ENCODE measurements at regions of chr2 and their contacts with region 1.

Region 1: GRCh38 chr2:134457765-134458472 is 204.0 kb downstream of the MGAT5 start:
- DNase-seq: no peak
- ATAC-seq: no peak
- H3K4me3 ChIP-seq: no peak overlapping the region
- H3K27ac ChIP-seq: no peak overlapping the region
- H3K4me1 ChIP-seq: no peaks in the 10 kb centered on the region
- H3K27me3 ChIP-seq: no peaks in the 10 kb centered on the region
- CTCF ChIP-seq: no peak

Region 2: GRCh38 chr2:134897932-134898331 is 440.0 kb after region 1 on chr2:
- intact Hi-C with region 1: loop called (anchors 5 to 10 kb)
- DNase-seq: no peak
- ATAC-seq: no peak
- H3K4me3 ChIP-seq: no peak overlapping the region
- H3K27ac ChIP-seq: no peak overlapping the region
- H3K4me1 ChIP-seq: no peaks in the 10 kb centered on the region
- H3K27me3 ChIP-seq: no peaks in the 10 kb centered on the region
- CTCF ChIP-seq: peak; percentile 32

Region 3: DNA sequence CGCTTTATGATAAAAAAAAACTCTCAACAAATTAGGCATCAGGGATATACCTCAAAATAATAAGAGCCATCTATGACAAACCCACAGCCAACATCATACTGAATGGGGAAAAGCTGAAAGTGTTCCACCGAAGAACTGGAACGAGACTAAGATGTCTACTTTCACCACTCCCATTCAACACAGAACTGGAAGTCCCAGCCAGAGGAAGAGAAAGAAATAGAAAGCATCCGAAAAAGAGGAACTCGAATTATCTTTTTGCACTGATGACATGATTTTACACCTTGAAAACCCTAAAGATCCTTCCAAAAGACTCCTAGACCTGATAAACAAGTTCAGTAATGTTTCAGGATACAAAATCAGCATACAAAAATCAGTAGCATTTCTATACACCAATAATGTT is 951.5 kb after region 1 on chr2:
- intact Hi-C with region 1: no loop called
- DNase-seq: no peak
- ATAC-seq: no peak
- H3K4me3 ChIP-seq: no peak overlapping the region
- H3K27ac ChIP-seq: no peak overlapping the region
- H3K4me1 ChIP-seq: no peaks in the 10 kb centered on the region
- H3K27me3 ChIP-seq: no peaks in the 10 kb centered on the region
- CTCF ChIP-seq: no peak

Measured in psoas muscle (tissue), 8 donors.